ENCODE measurements at regions of chr21 and their contacts with region 1.

Region 1: DNA sequence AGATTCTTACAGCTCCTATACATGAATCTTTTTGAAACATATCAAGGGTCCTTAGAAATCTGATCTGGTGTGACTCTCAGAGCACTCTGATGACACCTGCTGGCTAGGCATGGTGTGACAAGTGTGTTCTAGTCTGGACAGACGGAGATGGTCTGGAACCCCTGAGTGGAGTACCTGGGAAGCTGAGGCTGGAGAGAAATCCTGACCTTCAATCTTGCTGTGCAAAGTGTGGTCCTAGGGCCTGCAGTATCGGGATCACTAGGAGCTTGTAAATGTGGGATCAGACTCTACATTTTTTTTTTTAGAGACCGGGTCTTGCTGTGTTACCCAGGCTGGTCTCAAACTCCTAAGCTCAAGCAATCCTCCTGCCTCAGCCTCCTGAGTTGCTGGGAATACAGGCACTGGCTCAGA is 78.6 kb upstream of the SOD1 start:
- DNase-seq: peak; percentile 88
- ATAC-seq: peak; percentile 97
- H3K4me3 Mint-ChIP-seq: no peak overlapping the region
- H3K27ac Mint-ChIP-seq: no peak overlapping the region
- H3K4me1 Mint-ChIP-seq: no peaks in the 10 kb centered on the region
- H3K27me3 Mint-ChIP-seq: peaks cover 3% of the 10 kb centered on the region
- CTCF ChIP-seq: peak; percentile 88

Region 2: GRCh38 chr21:31098576-31099005 is 482.3 kb before region 1 on chr21:
- CTCF ChIA-PET with region 1: interaction called, 17 read pairs
- POLR2A ChIA-PET with region 1: no interaction called
- intact Hi-C with region 1: loop called (anchors 10 kb)
- DNase-seq: peak; percentile 84
- ATAC-seq: peak; percentile 87
- H3K4me3 Mint-ChIP-seq: no peak overlapping the region
- H3K27ac Mint-ChIP-seq: no peak overlapping the region
- H3K4me1 Mint-ChIP-seq: peaks cover 18% of the 10 kb centered on the region
- H3K27me3 Mint-ChIP-seq: peaks cover 2% of the 10 kb centered on the region
- CTCF ChIP-seq: peak; percentile 92

Region 3: GRCh38 chr21:31117128-31117916 is 463.5 kb before region 1 on chr21:
- CTCF ChIA-PET with region 1: interaction called, 14 read pairs
- POLR2A ChIA-PET with region 1: no interaction called
- intact Hi-C with region 1: no loop called
- DNase-seq: no peak
- ATAC-seq: peak; percentile 73
- H3K4me3 Mint-ChIP-seq: no peak overlapping the region
- H3K27ac Mint-ChIP-seq: no peak overlapping the region
- H3K4me1 Mint-ChIP-seq: peaks cover 8% of the 10 kb centered on the region
- H3K27me3 Mint-ChIP-seq: no peaks in the 10 kb centered on the region
- CTCF ChIP-seq: peak; percentile 44

Region 4: GRCh38 chr21:31180256-31181081 is 400.4 kb before region 1 on chr21:
- CTCF ChIA-PET with region 1: interaction called, 12 read pairs
- POLR2A ChIA-PET with region 1: interaction called, 4 read pairs
- intact Hi-C with region 1: no loop called
- DNase-seq: peak; percentile 35
- ATAC-seq: no peak
- H3K4me3 Mint-ChIP-seq: peak overlapping the region; percentile 84
- H3K27ac Mint-ChIP-seq: peak overlapping the region; percentile 94
- H3K4me1 Mint-ChIP-seq: peaks cover 74% of the 10 kb centered on the region
- H3K27me3 Mint-ChIP-seq: no peaks in the 10 kb centered on the region
- CTCF ChIP-seq: peak; percentile 72

Region 5: GRCh38 chr21:31213795-31214194 is 367.1 kb before region 1 on chr21:
- CTCF ChIA-PET with region 1: interaction called, 17 read pairs
- POLR2A ChIA-PET with region 1: no interaction called
- intact Hi-C with region 1: no loop called
- DNase-seq: no peak
- ATAC-seq: no peak
- H3K4me3 Mint-ChIP-seq: no peak overlapping the region
- H3K27ac Mint-ChIP-seq: no peak overlapping the region
- H3K4me1 Mint-ChIP-seq: no peaks in the 10 kb centered on the region
- H3K27me3 Mint-ChIP-seq: no peaks in the 10 kb centered on the region
- CTCF ChIP-seq: no peak

Region 6: GRCh38 chr21:31526040-31526439 is 54.8 kb before region 1 on chr21:
- CTCF ChIA-PET with region 1: no interaction called
- POLR2A ChIA-PET with region 1: no interaction called
- intact Hi-C with region 1: no loop called
- DNase-seq: no peak
- ATAC-seq: no peak
- H3K4me3 Mint-ChIP-seq: no peak overlapping the region
- H3K27ac Mint-ChIP-seq: no peak overlapping the region
- H3K4me1 Mint-ChIP-seq: peaks cover 8% of the 10 kb centered on the region
- H3K27me3 Mint-ChIP-seq: no peaks in the 10 kb centered on the region
- CTCF ChIP-seq: no peak

Region 7: DNA sequence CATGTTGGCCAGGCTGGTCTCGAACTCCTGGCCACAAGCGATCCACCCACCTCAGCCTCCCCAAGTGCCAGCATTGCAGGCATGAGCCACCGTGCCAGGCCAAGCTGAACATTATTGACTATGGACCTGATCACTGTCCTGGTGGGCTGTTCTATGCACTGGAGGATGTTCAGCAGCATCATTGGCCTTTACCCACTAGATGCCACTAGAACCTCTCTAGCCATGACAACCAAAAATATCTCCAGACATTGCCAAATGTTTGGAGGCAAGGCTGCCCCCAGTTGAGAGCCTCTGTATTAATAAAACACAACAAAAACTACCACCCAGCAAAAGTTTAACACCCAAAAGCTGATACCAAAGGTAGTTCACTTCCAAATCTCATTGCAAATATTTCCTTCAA is 32.2 kb before region 1 on chr21:
- CTCF ChIA-PET with region 1: interaction called, 15 read pairs
- POLR2A ChIA-PET with region 1: no interaction called
- intact Hi-C with region 1: no loop called
- DNase-seq: no peak
- ATAC-seq: no peak
- H3K4me3 Mint-ChIP-seq: no peak overlapping the region
- H3K27ac Mint-ChIP-seq: no peak overlapping the region
- H3K4me1 Mint-ChIP-seq: peaks cover 11% of the 10 kb centered on the region
- H3K27me3 Mint-ChIP-seq: peaks cover 5% of the 10 kb centered on the region
- CTCF ChIP-seq: no peak

Region 8: GRCh38 chr21:31592963-31593560 is 12.2 kb after region 1 on chr21:
- CTCF ChIA-PET with region 1: interaction called, 26 read pairs
- POLR2A ChIA-PET with region 1: no interaction called
- intact Hi-C with region 1: no loop called
- DNase-seq: no peak
- ATAC-seq: no peak
- H3K4me3 Mint-ChIP-seq: no peak overlapping the region
- H3K27ac Mint-ChIP-seq: no peak overlapping the region
- H3K4me1 Mint-ChIP-seq: no peaks in the 10 kb centered on the region
- H3K27me3 Mint-ChIP-seq: no peaks in the 10 kb centered on the region
- CTCF ChIP-seq: no peak

Measured in activated CD8-positive, alpha-beta T cell treated with anti-CD3 and anti-CD28 coated beads for 36 hours (primary cell).